PC-3 (cell line): ENCODE measurements at regions of chr10 and their contacts with region 1.

Region 1: GRCh38 chr10:91745074-91745832 is 53.0 kb upstream of the TNKS2 start:
- DNase-seq: peak; percentile 73
- ATAC-seq: peak; percentile 100
- H3K4me3 ChIP-seq: peak overlapping the region; percentile 53
- H3K27ac ChIP-seq: no peak overlapping the region
- H3K4me1 ChIP-seq: no peaks in the 10 kb centered on the region
- H3K27me3 ChIP-seq: no peaks in the 10 kb centered on the region
- CTCF ChIP-seq: peak; percentile 74

Region 2: GRCh38 chr10:91389636-91390512 is 355.4 kb before region 1 on chr10:
- CTCF ChIA-PET with region 1: interaction called, 3 read pairs
- POLR2A ChIA-PET with region 1: no interaction called
- intact Hi-C with region 1: loop called (anchors 5 kb)
- DNase-seq: peak; percentile 71
- ATAC-seq: peak; percentile 80
- H3K4me3 ChIP-seq: peak overlapping the region; percentile 41; the same call in 1 of the 2 replicates
- H3K27ac ChIP-seq: no peak overlapping the region
- H3K4me1 ChIP-seq: no peaks in the 10 kb centered on the region
- H3K27me3 ChIP-seq: no peaks in the 10 kb centered on the region; the same call in 1 of the 2 replicates
- CTCF ChIP-seq: peak; percentile 62

Region 3: DNA sequence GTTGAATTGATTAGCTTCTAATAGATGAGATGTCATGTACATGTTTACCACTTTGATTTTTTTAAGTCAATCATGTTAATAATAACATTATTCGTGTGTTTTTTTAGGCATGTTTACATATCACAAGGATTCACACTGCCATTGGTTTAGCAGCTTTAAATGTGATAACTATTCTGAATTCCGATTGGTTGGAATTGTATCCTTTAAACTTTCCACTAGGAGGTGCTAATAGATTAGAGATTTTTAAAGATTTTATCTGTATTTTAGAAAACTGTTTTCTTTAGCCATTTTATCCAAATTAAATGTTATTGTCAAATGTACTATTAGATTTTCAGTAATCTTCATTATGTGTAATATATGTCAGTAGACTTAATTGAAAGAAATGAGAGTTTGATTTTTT is 251.9 kb before region 1 on chr10:
- CTCF ChIA-PET with region 1: no interaction called
- POLR2A ChIA-PET with region 1: no interaction called
- intact Hi-C with region 1: loop called (anchors 5 kb)
- DNase-seq: peak; percentile 65
- ATAC-seq: 0 out of 2 replicates have a peak, but pooled peaks have one; percentile 33
- H3K4me3 ChIP-seq: no peak overlapping the region
- H3K27ac ChIP-seq: no peak overlapping the region
- H3K4me1 ChIP-seq: no peaks in the 10 kb centered on the region
- H3K27me3 ChIP-seq: no peaks in the 10 kb centered on the region
- CTCF ChIP-seq: peak; percentile 63

Region 4: GRCh38 chr10:91551856-91552255 is 193.4 kb before region 1 on chr10:
- CTCF ChIA-PET with region 1: no interaction called
- POLR2A ChIA-PET with region 1: no interaction called
- intact Hi-C with region 1: loop called (anchors 5 kb)
- DNase-seq: peak; percentile 40
- ATAC-seq: peak; percentile 90
- H3K4me3 ChIP-seq: no peak overlapping the region
- H3K27ac ChIP-seq: no peak overlapping the region
- H3K4me1 ChIP-seq: 0 out of 2 replicates have a peak, but pooled peaks cover 4% of the 10 kb centered on the region
- H3K27me3 ChIP-seq: no peaks in the 10 kb centered on the region
- CTCF ChIP-seq: peak; percentile 78

Region 5: DNA sequence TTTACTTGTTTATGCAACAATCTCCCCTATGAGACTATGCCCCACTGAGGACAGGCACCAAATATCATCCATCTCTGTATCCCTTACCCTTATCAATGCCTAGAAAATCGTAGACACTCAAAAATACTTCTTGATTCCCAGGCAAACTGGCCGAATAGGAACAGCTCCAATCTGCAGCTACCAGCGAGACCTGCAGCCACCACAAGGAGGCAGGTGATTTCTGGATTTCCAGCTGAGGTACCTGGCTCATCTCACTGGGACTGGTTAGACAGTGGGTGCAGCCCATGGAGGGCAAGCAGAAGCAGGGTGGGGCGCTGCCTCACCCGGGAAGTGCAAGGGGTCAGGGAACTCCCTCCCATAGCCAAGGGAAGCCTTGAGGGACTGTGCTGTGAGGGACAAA is 101.6 kb before region 1 on chr10:
- CTCF ChIA-PET with region 1: interaction called, 3 read pairs
- POLR2A ChIA-PET with region 1: no interaction called
- intact Hi-C with region 1: loop called (anchors 1 kb)
- DNase-seq: peak; percentile 63
- ATAC-seq: peak; percentile 85
- H3K4me3 ChIP-seq: no peak overlapping the region
- H3K27ac ChIP-seq: no peak overlapping the region
- H3K4me1 ChIP-seq: peaks cover 9% of the 10 kb centered on the region
- H3K27me3 ChIP-seq: no peaks in the 10 kb centered on the region
- CTCF ChIP-seq: peak; percentile 61

Region 6: DNA sequence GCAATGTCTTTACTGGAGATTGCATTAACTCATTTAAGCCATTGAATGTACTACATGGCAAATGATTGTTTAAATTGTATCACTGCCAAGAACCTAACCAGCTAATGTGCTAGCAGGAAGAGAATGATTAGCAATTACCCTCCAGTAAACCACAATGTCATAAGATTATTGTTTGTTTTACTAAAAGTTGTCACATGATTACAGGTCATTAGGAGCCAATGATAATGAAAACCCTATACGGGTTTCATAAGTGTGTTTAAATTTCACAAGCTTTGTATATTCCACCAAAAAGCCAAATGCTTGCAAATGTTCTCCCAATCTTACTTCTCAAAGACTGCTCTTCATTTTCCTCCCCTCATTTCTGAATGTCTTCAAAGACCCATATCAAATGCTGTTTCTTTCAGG is 35.9 kb before region 1 on chr10:
- CTCF ChIA-PET with region 1: interaction called, 17 read pairs
- POLR2A ChIA-PET with region 1: no interaction called
- intact Hi-C with region 1: no loop called
- DNase-seq: peak; percentile 14
- ATAC-seq: peak; percentile 57; the same call in 1 of the 2 replicates
- H3K4me3 ChIP-seq: no peak overlapping the region
- H3K27ac ChIP-seq: no peak overlapping the region
- H3K4me1 ChIP-seq: no peaks in the 10 kb centered on the region
- H3K27me3 ChIP-seq: no peaks in the 10 kb centered on the region
- CTCF ChIP-seq: no peak

Region 7: GRCh38 chr10:91758303-91759146 is 13.3 kb after region 1 on chr10:
- CTCF ChIA-PET with region 1: interaction called, 12 read pairs
- POLR2A ChIA-PET with region 1: no interaction called
- intact Hi-C with region 1: no loop called
- DNase-seq: peak; percentile 75
- ATAC-seq: peak; percentile 77
- H3K4me3 ChIP-seq: no peak overlapping the region
- H3K27ac ChIP-seq: no peak overlapping the region
- H3K4me1 ChIP-seq: no peaks in the 10 kb centered on the region; the same call in 1 of the 2 replicates
- H3K27me3 ChIP-seq: no peaks in the 10 kb centered on the region
- CTCF ChIP-seq: peak; percentile 71